Transverse colon (tissue), 4 donors: ENCODE measurements at regions of chr13 and their contacts with region 1.

Region 1: GRCh38 chr13:21613791-21614190 is 9.8 kb upstream of the MICU2 start:
- DNase-seq: no peak
- H3K4me3 ChIP-seq: no peak overlapping the region
- H3K27ac ChIP-seq: no peak overlapping the region
- H3K4me1 ChIP-seq: peaks cover 0 to 9% (median 4%) of the 10 kb centered on the region in 4 donors
- H3K27me3 ChIP-seq: peaks cover 1% of the 10 kb centered on the region
- CTCF ChIP-seq: no peak
- EP300 ChIP-seq: no peak
- POLR2A ChIP-seq: no peak

Region 2: DNA sequence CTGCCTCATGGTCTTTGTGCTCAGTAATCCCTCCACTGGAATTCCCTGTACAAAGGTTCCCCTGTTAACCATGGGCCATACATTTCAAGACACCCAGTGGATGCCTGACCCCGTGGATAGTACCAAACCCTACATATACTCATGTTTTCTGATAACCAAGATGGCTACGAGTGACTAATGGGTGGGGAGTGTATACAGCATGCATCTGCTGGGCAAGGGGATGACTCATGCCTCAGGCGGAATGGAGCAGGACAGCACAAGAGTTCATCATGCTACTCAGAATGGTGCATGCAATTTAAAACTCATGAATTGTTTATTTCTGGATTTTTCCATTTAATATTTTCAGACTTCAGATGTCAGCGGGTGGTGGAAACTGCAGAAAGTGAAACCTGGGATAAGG is 43.7 kb after region 1 on chr13:
- in situ Hi-C with region 1: no loop called
- intact Hi-C with region 1: loop called (anchors 1 kb)
- DNase-seq: no peak
- H3K4me3 ChIP-seq: no peak overlapping the region
- H3K27ac ChIP-seq: no peak overlapping the region
- H3K4me1 ChIP-seq: peaks cover 0 to 10% (median 3%) of the 10 kb centered on the region in 4 donors
- H3K27me3 ChIP-seq: no peaks in the 10 kb centered on the region
- CTCF ChIP-seq: no peak
- EP300 ChIP-seq: no peak
- POLR2A ChIP-seq: no peak

Region 3: DNA sequence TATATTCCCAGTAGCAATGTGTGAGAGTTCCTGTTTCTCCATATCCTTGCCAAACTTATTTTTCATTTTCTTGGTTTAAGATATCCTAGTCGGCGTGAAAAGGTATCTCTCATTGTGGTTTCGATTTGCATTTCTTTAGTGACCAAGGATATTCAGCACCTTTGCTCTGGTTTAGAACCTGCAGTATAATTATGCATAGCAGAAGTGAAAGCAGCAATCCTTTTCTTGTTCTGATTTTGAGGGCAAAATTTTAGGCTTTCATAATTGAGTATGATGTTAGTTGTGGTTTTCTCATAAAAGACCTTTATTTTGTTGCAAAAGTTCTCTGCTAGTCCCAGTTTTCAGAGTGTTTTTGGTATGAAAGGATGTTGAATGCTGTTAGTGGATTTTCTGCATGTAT is 548.1 kb after region 1 on chr13:
- in situ Hi-C with region 1: no loop called
- intact Hi-C with region 1: no loop called
- DNase-seq: no peak
- H3K4me3 ChIP-seq: no peak overlapping the region
- H3K27ac ChIP-seq: no peak overlapping the region
- H3K4me1 ChIP-seq: no peaks in the 10 kb centered on the region
- H3K27me3 ChIP-seq: no peaks in the 10 kb centered on the region
- CTCF ChIP-seq: no peak
- EP300 ChIP-seq: no peak
- POLR2A ChIP-seq: no peak

Region 4: DNA sequence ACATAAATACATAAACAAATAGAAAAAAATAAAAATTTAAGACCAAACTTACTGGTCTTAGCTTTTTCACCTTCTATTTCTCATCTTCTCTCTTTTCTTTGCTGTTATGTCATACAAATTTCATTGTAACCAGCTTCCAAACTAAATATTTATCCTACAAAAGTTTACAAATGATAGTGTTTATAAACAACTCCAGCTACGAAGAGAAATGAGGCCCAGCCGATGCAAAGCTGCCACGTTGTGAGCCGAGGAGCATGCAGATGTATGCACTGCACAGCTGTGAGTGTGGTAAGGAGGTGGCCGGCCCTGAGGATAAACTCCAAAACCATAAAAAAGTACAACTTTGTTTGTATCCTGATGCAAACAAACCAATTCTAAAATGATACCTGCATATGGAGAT is 924.6 kb after region 1 on chr13:
- in situ Hi-C with region 1: no loop called
- intact Hi-C with region 1: no loop called
- DNase-seq: no peak
- H3K4me3 ChIP-seq: no peak overlapping the region
- H3K27ac ChIP-seq: no peak overlapping the region
- H3K4me1 ChIP-seq: no peaks in the 10 kb centered on the region
- H3K27me3 ChIP-seq: no peaks in the 10 kb centered on the region
- CTCF ChIP-seq: no peak
- EP300 ChIP-seq: no peak
- POLR2A ChIP-seq: no peak